Transverse colon (tissue), 4 donors: ENCODE measurements at regions of chr2 and their contacts with region 1.

Region 1: GRCh38 chr2:15636972-15637785 is 45.5 kb downstream of the DDX1 start:
- DNase-seq: peak; percentile 60
- H3K4me3 ChIP-seq: no peak overlapping the region
- H3K27ac ChIP-seq: no peak overlapping the region
- H3K4me1 ChIP-seq: peaks cover 0 to 8% (median 0%) of the 10 kb centered on the region in 4 donors
- H3K27me3 ChIP-seq: no peaks in the 10 kb centered on the region
- CTCF ChIP-seq: peak; percentile 77 to 89 (median 80)
- EP300 ChIP-seq: no peak
- POLR2A ChIP-seq: no peak

Region 2: GRCh38 chr2:15652801-15653200 is 15.6 kb after region 1 on chr2:
- in situ Hi-C with region 1: no loop called
- intact Hi-C with region 1: no loop called
- DNase-seq: no peak
- H3K4me3 ChIP-seq: no peak overlapping the region
- H3K27ac ChIP-seq: no peak overlapping the region
- H3K4me1 ChIP-seq: no peaks in the 10 kb centered on the region
- H3K27me3 ChIP-seq: no peaks in the 10 kb centered on the region
- CTCF ChIP-seq: no peak
- EP300 ChIP-seq: no peak
- POLR2A ChIP-seq: no peak

Region 3: DNA sequence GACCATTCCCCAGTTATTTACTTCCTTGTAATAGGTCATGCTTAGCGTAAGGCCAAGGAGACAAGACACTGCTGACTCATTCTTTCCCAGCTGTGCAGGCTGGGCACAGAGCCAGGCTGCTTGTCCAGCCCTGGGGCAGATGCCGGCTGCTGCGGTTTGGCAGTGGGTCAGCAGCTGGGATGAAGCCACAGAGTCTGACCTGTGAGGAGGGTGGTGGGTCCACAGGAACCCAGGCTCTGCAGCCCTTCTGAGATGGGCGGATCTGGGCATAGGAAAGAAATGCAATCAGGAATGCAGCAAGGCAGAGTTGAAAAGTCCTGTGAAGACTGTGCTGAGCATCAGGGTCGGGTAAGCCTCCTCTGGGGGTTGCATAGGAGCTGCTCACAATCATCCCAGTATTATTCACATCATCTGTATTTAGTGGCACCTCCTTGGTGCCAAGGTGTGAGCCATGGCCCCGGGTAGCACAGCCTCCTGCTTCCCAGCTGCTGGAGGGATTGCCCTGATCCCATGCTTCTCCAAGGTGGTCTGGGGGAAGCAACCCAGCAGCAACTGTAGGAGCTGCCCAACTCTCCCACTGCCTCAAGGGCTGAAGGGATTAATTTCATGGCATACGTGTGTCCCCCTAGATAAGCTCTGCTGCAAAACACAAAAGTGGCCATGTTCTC is 93.5 kb after region 1 on chr2:
- in situ Hi-C with region 1: loop called in 1 of 4 experiments (anchors 25 kb)
- intact Hi-C with region 1: no loop called
- DNase-seq: peak; percentile 86
- H3K4me3 ChIP-seq: no peak overlapping the region
- H3K27ac ChIP-seq: no peak overlapping the region
- H3K4me1 ChIP-seq: peaks cover 7 to 33% (median 12%) of the 10 kb centered on the region in 4 donors
- H3K27me3 ChIP-seq: no peaks in the 10 kb centered on the region
- CTCF ChIP-seq: no peak
- EP300 ChIP-seq: no peak
- POLR2A ChIP-seq: no peak

Region 4: GRCh38 chr2:15939854-15940660 is 302.9 kb after region 1 on chr2 and contains the start of gene MYCN:
- in situ Hi-C with region 1: loop called in 1 of 4 experiments (anchors 25 kb)
- intact Hi-C with region 1: no loop called
- DNase-seq: peak; percentile 42
- H3K4me3 ChIP-seq: peak within 1 kb of the TSS; percentile 3 to 66 (median 41)
- H3K27ac ChIP-seq: peak within 1 kb of the TSS in 1 of 4 donors; percentile 55
- H3K4me1 ChIP-seq: peaks cover 12 to 52% (median 35%) of the 10 kb centered on the region in 4 donors
- H3K27me3 ChIP-seq: peaks cover 42% of the 10 kb centered on the region
- CTCF ChIP-seq: peak; percentile 64 to 73 (median 69)
- EP300 ChIP-seq: no peak
- POLR2A ChIP-seq: no peak
- total RNA-seq, gene MYCN: 0.48 to 7.0 (median 0.82) TPM in 3 of 4 donors, not detected in the other

Region 5: DNA sequence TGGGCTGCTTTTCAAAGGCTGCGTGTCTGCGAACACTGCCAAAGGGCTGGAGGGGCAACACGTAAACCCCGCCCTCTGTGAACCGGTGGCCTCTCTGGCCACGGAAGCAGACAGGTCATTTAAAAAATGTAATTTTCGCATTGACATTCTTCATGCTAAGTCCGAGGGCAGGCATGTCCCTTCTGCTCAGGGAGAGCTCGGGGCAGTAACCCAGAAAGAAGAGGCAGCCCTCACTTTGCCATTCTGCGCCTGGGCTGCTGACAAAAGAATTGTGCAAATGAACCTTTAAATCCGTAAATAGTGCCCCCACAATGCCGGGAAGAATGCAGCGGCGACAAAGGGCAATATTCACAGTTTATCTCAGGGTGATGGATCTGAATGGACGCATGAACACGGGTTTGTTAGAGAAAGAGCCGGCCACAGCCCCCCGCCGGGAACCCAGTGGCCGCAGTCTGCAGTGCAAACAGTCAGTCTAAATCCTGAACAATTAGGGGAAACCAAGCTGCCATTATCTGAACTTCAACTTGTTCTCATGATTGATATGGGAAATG is 529.3 kb after region 1 on chr2:
- in situ Hi-C with region 1: no loop called
- intact Hi-C with region 1: loop called (anchors 10 kb)
- DNase-seq: no peak
- H3K4me3 ChIP-seq: no peak overlapping the region
- H3K27ac ChIP-seq: no peak overlapping the region
- H3K4me1 ChIP-seq: no peaks in the 10 kb centered on the region
- H3K27me3 ChIP-seq: no peaks in the 10 kb centered on the region
- CTCF ChIP-seq: no peak
- EP300 ChIP-seq: no peak
- POLR2A ChIP-seq: no peak

Region 6: DNA sequence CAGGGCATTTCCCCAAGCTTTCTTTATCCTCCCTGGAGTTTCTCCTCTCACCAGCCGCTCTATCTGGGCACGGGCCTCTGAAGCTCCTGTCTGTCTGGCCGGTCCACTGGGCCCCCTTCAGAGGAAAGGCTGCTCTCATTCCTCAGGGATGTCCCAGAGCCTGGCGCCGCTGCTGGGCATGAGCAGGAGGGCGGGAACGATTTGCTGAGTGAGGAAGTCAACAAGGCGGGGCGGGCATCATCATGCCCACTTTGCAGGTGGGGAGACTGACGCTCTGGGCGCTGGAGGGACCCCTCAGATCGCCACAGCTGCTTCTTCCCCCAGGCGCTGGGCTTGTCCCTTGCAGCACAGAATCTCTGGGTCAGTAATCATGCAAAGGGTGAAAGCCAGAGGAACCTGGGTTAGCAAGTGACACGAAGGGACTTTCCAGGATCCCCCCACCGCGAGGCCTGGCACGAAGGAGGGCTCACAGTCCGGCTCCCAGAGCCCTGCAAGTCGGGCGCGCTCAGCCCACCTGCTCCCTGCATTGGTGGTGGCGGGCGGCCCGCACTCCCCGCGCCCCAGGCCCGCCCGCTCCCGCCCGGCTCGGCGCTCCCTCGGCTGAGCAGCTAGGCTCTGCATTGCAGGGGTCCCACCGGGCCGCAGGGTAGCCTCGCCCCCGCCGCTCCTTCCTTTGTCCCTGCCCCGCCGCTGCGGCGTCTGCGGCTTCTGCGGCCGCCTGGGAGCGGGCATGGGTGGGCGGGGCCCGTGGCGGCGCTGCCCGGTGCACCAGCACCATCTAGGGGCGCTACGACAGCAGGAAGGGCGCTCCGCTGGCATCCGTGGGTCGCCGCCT is 870.7 kb after region 1 on chr2:
- in situ Hi-C with region 1: loop called in 3 of 4 experiments (anchors 10 to 25 kb)
- intact Hi-C with region 1: loop called (anchors 10 kb)
- DNase-seq: peak; percentile 43
- H3K4me3 ChIP-seq: peak overlapping the region; percentile 23 to 51 (median 30)
- H3K27ac ChIP-seq: no peak overlapping the region
- H3K4me1 ChIP-seq: peaks cover 0 to 10% (median 9%) of the 10 kb centered on the region in 4 donors
- H3K27me3 ChIP-seq: peaks cover 43% of the 10 kb centered on the region
- CTCF ChIP-seq: peak; percentile 36 to 74 (median 65)
- EP300 ChIP-seq: no peak
- POLR2A ChIP-seq: no peak

Region 7: DNA sequence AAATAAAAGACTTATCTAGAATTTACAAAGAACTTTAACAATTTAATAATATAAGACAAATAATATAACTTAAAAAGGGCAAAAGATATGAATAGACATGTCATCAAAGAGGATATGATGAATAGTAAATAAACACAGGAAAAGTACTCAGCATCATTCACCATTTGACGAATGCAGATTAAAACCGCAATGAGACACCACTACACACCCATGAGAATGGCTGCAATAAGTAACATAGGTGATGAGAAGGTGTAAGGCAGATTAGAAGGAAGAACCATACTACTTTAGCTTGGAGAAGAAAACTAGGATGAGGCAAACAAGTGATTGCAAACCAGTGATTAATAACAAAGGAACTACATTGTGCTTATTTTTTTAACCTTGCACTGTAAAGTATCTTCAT is 876.4 kb after region 1 on chr2:
- in situ Hi-C with region 1: loop called in 3 of 4 experiments (anchors 10 to 25 kb)
- intact Hi-C with region 1: loop called (anchors 10 kb)
- DNase-seq: no peak
- H3K4me3 ChIP-seq: no peak overlapping the region
- H3K27ac ChIP-seq: no peak overlapping the region
- H3K4me1 ChIP-seq: no peaks in the 10 kb centered on the region
- H3K27me3 ChIP-seq: peaks cover 35% of the 10 kb centered on the region
- CTCF ChIP-seq: no peak
- EP300 ChIP-seq: no peak
- POLR2A ChIP-seq: no peak

Region 8: DNA sequence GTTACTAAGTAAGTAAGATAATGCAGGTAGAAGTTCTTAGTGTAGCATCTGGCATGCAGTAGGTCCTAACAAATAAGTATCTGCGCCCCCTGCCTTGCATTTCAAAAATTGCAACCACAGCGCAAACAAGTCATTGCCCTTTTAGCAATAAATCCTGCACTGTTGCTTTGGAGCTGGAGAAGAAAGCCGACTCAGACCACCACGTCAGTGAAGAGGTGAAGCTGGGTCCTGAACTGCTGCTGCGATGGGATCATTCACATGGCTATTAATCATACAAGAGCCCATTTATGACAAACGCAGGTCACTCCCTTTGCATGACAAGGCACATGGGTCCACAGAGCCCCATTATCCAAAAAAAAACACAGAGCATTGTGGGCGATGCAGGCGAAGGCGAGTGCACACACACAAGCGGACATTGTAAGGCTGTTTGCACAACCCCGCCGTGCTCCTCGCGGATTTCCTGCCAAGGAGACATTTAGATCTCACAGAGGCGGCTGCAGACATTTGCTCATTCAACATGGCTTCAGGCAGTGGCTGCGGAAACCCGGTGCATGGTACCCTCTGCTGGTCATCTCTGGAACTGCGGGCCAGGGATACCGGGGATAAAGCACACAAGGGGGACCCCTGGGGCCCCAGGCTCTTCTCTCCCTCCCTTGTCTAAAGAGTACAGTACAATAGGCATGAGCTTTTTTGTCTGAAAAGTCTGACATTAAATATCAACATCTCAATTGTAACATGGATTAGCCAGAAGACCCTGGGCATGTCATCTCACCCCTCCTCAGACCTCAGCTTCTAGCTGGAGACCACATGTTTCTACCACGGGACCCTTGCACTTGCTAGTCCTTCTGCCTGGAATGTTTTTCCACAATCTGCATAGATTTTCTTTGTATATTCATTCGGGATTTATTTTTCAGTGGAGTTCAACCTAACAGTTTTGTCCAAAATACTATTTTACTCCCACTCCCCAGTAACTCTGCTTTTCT is 971.8 kb after region 1 on chr2:
- in situ Hi-C with region 1: loop called in 3 of 4 experiments (anchors 25 kb)
- intact Hi-C with region 1: no loop called
- DNase-seq: peak; percentile 84
- H3K4me3 ChIP-seq: peak overlapping the region in 3 of 4 donors; percentile 24 to 48 (median 34)
- H3K27ac ChIP-seq: peak overlapping the region in 3 of 4 donors; percentile 23 to 48 (median 41)
- H3K4me1 ChIP-seq: peaks cover 0 to 15% (median 3%) of the 10 kb centered on the region in 4 donors
- H3K27me3 ChIP-seq: no peaks in the 10 kb centered on the region
- CTCF ChIP-seq: peak; percentile 78 to 97 (median 93)
- EP300 ChIP-seq: no peak
- POLR2A ChIP-seq: no peak